ENCODE measurements at regions of chr3 and their contacts with region 1.

Region 1: GRCh38 chr3:47016934-47017435 is 37.5 kb downstream of the NBEAL2 start:
- DNase-seq: peak; percentile 79
- H3K4me3 Mint-ChIP-seq: peak overlapping the region; percentile 50
- H3K27ac Mint-ChIP-seq: peak overlapping the region; percentile 86
- H3K4me1 Mint-ChIP-seq: peaks cover 39% of the 10 kb centered on the region
- H3K27me3 Mint-ChIP-seq: no peaks in the 10 kb centered on the region

Region 2: DNA sequence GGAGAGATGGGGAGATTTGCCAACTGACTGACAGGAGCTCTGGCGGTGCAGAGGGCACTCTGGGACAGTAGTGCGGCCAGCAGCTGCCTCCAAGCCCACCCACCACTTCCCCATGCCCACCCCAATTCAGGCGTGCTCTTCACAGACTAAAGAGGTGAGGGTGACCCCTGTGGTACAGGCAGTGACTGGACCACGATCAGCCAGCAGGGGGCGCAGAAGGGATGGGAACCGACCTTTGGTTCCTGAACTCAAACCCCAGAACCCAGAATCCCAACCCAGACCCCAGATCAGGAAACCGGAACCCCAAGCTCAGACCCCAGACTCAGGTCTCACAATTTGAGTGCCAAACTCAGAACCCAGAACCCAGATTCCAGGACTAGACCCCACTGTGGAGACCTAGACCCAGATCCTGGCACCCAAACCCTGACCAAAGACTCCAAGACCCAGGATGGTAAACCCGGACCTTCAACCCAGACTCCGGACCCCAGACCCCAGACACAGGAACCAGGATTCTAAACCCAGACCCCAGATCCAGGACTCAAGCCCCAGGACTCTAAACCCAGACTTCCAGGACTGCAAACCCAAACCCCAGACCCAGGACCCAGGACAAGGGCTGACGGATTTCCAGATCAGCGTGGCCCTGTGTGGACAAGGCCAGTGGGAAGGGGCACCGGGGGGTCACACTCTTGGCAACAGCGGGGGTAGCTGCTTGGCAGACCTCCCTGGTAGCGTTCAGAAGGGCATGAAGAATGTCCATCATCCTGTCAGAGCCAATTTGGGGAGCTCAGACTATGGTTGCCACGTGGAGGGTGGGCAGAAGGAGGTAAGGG is 150.1 kb before region 1 on chr3:
- intact Hi-C with region 1: no loop called
- DNase-seq: peak; percentile 93
- H3K4me3 Mint-ChIP-seq: no peak overlapping the region
- H3K27ac Mint-ChIP-seq: no peak overlapping the region
- H3K4me1 Mint-ChIP-seq: no peaks in the 10 kb centered on the region
- H3K27me3 Mint-ChIP-seq: peaks cover 4% of the 10 kb centered on the region

Region 3: DNA sequence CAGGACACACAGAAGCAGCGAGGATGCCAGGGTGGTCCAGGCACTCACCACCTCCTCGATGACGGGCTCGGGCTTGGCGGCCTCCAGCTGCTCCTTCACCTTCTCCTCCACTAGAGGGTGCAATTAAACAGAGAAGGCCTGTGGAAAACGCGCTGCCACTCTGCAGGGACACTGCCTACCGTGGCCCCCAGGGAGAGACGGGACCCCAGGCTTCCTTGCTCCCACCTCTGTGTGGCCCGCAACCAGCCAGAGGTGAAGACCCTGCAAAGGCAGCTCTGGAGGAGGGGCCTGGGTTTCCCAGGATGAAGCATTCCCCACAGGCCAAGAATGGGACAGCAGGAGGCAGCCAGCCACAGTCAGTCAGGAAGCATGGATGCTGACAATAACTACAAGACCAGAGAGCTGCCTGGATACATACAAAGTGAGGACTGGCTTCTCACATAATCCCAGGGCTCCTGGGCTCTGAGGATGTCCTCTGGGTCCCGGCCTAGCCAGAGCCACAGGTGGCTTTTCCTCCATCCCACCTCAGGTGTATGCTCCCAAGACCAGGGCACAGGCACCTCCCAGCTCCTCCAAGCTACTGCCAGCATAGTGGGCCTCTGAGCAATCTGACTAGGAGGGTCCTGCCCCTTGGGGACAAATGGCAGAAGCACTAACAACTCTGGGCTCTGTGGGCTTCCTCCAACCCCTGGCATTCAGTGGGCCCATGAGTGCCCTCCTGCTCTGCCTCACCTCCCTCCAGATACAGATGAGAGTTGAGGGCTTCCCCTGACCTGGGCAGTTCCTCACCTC is 93.2 kb before region 1 on chr3:
- intact Hi-C with region 1: loop called (anchors 5 kb)
- DNase-seq: peak; percentile 80
- H3K4me3 Mint-ChIP-seq: no peak overlapping the region
- H3K27ac Mint-ChIP-seq: peak overlapping the region; percentile 80
- H3K4me1 Mint-ChIP-seq: peaks cover 28% of the 10 kb centered on the region
- H3K27me3 Mint-ChIP-seq: no peaks in the 10 kb centered on the region

Region 4: GRCh38 chr3:46947981-46948791 is 68.8 kb before region 1 on chr3:
- intact Hi-C with region 1: loop called (anchors 5 kb)
- DNase-seq: peak; percentile 87
- H3K4me3 Mint-ChIP-seq: peak overlapping the region; percentile 80
- H3K27ac Mint-ChIP-seq: peak overlapping the region; percentile 94
- H3K4me1 Mint-ChIP-seq: peaks cover 71% of the 10 kb centered on the region
- H3K27me3 Mint-ChIP-seq: no peaks in the 10 kb centered on the region

Region 5: DNA sequence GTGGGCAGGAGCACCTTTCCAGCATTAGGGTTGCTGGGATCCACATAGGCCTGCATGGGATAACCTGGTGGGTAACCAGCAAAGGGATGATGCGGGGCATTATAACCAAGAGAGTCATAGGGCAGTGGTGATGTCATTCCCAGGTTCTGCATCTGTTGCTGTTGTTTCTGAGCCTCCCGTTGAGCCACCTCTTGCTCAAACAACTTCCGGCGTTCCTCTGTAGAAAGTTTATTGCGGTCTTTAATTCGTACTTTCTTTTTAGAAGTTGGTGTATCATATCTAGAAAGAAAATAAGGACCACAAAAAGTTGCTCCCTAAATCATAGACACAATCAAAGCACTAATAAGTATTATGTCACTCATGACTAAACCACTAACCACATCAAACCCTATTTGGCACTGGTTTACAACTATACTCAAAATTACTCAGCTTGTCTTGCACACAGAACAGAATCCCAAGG is 40.3 kb after region 1 on chr3:
- intact Hi-C with region 1: loop called (anchors 1 kb)
- DNase-seq: peak; percentile 85
- H3K4me3 Mint-ChIP-seq: peak overlapping the region; percentile 29
- H3K27ac Mint-ChIP-seq: peak overlapping the region; percentile 78
- H3K4me1 Mint-ChIP-seq: peaks cover 30% of the 10 kb centered on the region
- H3K27me3 Mint-ChIP-seq: no peaks in the 10 kb centered on the region

Region 6: DNA sequence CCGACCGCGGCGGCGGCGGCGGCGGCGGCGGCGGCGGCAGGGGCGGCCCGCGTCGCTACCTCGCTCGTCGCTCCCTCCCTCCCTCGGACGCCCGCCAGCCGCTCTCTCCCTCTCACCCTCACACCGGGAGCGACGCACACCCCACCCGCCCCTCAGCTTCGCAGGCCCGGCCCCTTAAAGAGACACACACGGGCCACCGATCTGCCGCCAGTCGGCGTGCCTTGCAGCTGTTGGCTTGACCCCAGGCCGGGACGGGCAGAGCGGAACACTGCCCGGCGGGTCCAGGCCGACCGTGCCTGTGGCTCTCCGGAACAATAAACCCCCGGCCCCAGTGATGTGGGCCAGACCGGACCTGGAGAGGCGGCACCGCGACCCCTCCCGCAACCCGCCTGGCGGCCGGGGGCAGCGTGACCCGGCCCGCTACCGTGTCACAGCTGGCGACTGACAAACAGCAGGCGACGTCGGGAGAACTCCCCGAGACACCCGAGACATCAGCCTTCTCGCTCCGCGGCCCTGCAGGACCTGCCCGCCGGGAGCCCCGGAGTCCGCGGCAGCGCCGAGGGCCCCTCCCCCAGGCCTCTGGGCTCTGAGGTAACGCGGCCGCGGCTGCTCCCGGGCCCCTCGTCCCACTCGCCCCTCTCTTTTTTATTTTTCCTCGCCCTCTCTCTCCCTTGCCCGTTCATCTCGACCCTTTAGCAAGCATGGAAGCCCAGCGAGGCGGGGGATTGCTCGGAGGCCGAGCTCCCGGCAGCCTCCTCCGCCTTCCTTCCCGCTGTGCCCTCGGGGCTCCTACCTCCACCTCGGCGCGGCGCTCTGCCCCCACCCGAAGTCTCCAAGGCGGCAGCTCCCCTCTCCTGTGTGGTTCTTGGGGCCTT is 147.3 kb after region 1 on chr3 and contains the start of gene SETD2:
- intact Hi-C with region 1: loop called (anchors 2 kb)
- DNase-seq: peak; percentile 94
- H3K4me3 Mint-ChIP-seq: peak within 1 kb of the TSS; percentile 94
- H3K27ac Mint-ChIP-seq: peak within 1 kb of the TSS; percentile 98
- H3K4me1 Mint-ChIP-seq: peaks cover 46% of the 10 kb centered on the region
- H3K27me3 Mint-ChIP-seq: no peaks in the 10 kb centered on the region
- total RNA-seq, gene SETD2: 41.5 and 42.0 TPM in 2 replicates

Region 7: GRCh38 chr3:47324278-47324865 is 307.4 kb after region 1 on chr3:
- intact Hi-C with region 1: loop called (anchors 5 kb)
- DNase-seq: peak; percentile 85
- H3K4me3 Mint-ChIP-seq: no peak overlapping the region
- H3K27ac Mint-ChIP-seq: no peak overlapping the region
- H3K4me1 Mint-ChIP-seq: peaks cover 3% of the 10 kb centered on the region
- H3K27me3 Mint-ChIP-seq: no peaks in the 10 kb centered on the region